IMR-90 (cell line): ENCODE measurements at regions of chr6 and their contacts with region 1.

Region 1: DNA sequence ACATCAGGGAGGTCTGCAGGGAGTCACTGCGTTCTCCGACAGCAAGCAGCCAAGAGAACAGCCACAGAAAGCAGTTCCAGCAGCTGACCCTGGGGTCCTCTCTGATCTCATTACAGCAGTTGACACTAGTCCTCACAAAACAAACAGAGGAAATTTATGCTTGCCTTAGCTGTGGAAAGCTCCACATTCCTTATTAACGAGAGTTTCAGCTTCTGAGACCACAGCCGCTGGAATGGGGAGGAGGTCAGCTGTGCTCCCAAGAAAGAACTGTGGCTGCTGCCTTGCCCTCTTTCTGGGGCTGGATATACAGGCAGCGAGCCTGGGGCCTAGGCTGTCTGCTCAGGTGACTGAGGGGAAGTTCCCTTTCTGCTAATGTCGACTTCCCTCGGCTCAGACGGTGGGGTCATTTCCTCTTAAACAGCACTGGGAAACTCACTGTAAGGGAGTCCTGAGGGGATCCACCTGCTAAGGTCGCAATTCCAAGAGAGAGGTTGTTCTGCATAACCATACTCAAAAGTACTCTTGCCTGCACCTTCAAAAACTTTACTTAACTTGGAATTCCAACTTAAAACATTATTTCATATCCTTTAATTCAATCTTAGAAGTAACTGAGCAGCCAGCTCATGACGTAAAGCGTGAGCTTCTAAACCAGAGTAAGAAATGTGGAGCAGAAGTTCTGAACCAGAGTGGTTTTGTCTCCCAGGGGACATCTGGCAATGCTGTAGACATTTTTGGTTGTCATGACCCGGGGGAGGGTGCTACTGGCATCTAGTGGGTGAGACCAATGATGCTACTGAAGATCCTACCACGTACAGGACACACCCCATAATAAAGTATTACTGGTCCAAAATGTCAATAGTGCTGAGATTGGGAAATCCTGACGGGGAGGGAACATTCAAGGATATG is 80.3 kb downstream of the BACH2 start:
- DNase-seq: peak; percentile 35
- ATAC-seq: no peak
- H3K4me3 ChIP-seq: no peak overlapping the region
- H3K27ac ChIP-seq: no peak overlapping the region
- H3K4me1 ChIP-seq: peaks cover 19% of the 10 kb centered on the region
- H3K27me3 ChIP-seq: no peaks in the 10 kb centered on the region
- CTCF ChIP-seq: no peak
- POLR2A ChIP-seq: no peak
- RAD21 ChIP-seq: no peak

Region 2: GRCh38 chr6:89970609-89971337 is 245.6 kb before region 1 on chr6:
- CTCF ChIA-PET with region 1: no interaction called
- POLR2A ChIA-PET with region 1: no interaction called
- dilution Hi-C with region 1: no loop called
- in situ Hi-C with region 1: no loop called
- intact Hi-C with region 1: loop called (anchors 1 kb)
- DNase-seq: peak; percentile 74
- ATAC-seq: peak; percentile 93
- H3K4me3 ChIP-seq: no peak overlapping the region
- H3K27ac ChIP-seq: no peak overlapping the region
- H3K4me1 ChIP-seq: no peaks in the 10 kb centered on the region
- H3K27me3 ChIP-seq: no peaks in the 10 kb centered on the region; the same call in 1 of the 2 replicates
- CTCF ChIP-seq: peak; percentile 79
- POLR2A ChIP-seq: no peak
- RAD21 ChIP-seq: peak; percentile 86

Region 3: DNA sequence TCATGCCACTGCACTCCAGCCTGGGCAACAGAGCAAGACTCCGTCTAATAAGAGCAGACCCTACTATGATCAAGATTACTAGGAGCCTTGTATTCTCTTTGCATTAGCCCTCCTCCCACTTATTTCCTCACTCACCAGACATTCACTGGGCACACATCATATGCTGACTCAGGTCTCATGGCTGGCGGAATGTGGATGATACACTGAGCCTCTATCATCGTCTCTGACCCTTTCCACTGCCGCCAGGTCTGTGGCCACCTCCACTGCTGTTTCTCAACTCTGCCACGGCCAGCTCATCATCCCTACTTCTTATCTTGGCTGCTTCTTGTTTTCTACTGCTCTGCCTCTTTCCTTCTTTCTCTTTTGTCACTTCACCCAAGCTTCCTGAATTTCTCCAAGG is 80.7 kb before region 1 on chr6:
- CTCF ChIA-PET with region 1: no interaction called
- POLR2A ChIA-PET with region 1: no interaction called
- dilution Hi-C with region 1: no loop called
- in situ Hi-C with region 1: no loop called
- intact Hi-C with region 1: loop called (anchors 5 kb)
- DNase-seq: peak; percentile 90
- ATAC-seq: peak; percentile 78
- H3K4me3 ChIP-seq: no peak overlapping the region
- H3K27ac ChIP-seq: peak overlapping the region; percentile 55
- H3K4me1 ChIP-seq: peaks cover 11% of the 10 kb centered on the region
- H3K27me3 ChIP-seq: no peaks in the 10 kb centered on the region
- CTCF ChIP-seq: no peak
- POLR2A ChIP-seq: peak; percentile 20; the same call in 1 of the 2 replicates
- RAD21 ChIP-seq: no peak; the same call in 1 of the 2 replicates

Region 4: DNA sequence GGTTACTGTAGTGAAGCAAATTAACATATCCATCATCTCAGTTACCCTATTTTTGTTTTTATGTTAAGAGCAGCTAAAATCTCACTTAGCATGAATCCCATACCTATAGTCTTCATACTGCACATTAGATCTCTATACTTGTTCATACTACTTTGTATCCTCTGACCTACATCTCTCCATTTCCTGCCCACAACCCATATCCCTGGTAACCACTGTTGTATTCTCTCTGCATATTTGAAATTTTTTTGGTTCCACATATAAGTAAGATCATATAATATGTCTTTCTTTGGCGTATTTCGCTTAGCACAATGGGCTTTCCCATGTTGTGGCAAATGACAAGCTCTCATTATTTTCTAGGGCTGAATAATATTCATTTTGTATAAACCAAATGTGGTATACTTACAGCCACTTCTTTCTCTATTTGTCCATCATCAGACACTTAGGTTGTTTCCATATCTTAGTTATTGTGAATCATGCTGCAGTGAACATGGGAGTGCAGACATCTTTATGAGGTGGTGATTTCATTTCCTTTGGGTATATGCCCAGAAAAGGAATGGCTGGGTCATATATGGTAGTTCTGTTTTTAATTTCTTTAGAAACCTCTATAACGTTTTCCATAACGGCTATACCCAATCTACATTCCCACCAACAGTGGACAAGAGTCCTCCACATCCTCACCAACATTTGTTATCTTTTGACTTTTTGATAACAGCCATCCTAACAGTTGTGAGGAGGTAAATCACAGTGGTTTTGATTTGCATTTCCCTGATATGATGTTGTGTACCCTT is 40.6 kb after region 1 on chr6:
- CTCF ChIA-PET with region 1: no interaction called
- POLR2A ChIA-PET with region 1: no interaction called
- dilution Hi-C with region 1: no loop called
- in situ Hi-C with region 1: no loop called
- intact Hi-C with region 1: no loop called
- DNase-seq: peak; percentile 90
- ATAC-seq: peak; percentile 93
- H3K4me3 ChIP-seq: no peak overlapping the region
- H3K27ac ChIP-seq: no peak overlapping the region
- H3K4me1 ChIP-seq: no peaks in the 10 kb centered on the region; the same call in 1 of the 2 replicates
- H3K27me3 ChIP-seq: no peaks in the 10 kb centered on the region; the same call in 1 of the 2 replicates
- CTCF ChIP-seq: no peak
- POLR2A ChIP-seq: no peak
- RAD21 ChIP-seq: no peak

Region 5: GRCh38 chr6:90285611-90286381 is 69.5 kb after region 1 on chr6:
- CTCF ChIA-PET with region 1: interaction called, 5 read pairs
- POLR2A ChIA-PET with region 1: interaction called, 4 read pairs
- dilution Hi-C with region 1: no loop called
- in situ Hi-C with region 1: loop called (anchors 5 kb)
- intact Hi-C with region 1: loop called (anchors 1 kb)
- DNase-seq: peak; percentile 91
- ATAC-seq: peak; percentile 94
- H3K4me3 ChIP-seq: no peak overlapping the region
- H3K27ac ChIP-seq: no peak overlapping the region
- H3K4me1 ChIP-seq: no peaks in the 10 kb centered on the region
- H3K27me3 ChIP-seq: no peaks in the 10 kb centered on the region
- CTCF ChIP-seq: no peak
- POLR2A ChIP-seq: no peak
- RAD21 ChIP-seq: no peak; the same call in 1 of the 2 replicates

Region 6: DNA sequence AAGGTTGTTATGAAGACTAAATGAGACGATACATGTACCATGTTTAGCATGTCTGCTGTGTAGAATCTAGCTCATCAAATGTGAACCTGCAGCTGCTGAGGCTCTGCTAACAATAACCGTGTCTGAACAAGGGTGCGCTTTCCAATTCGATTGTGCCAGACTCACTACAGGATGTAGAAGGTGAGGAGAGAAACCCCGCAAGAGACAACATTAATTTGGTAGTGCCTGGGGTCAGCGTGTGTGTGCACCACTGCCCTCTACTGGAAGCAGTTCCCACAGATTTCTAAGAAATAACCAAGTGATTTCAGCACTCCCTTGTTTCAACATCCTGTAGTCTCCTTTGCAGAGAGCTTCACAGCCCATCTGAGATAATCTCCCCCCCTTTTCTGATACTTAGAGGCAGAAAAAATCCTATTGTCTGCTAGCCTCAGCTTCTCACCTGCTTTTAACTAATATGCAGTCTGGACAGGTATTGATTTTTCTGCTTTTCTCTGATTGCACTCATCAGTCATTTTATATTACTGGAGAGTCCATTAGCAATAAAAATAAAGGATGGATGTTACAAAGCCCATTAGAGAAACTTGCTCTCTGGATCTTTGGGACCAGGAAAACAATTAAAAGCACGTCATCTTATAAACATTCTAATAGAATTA is 177.0 kb after region 1 on chr6:
- CTCF ChIA-PET with region 1: interaction called, 7 read pairs
- POLR2A ChIA-PET with region 1: no interaction called
- dilution Hi-C with region 1: no loop called
- in situ Hi-C with region 1: no loop called
- intact Hi-C with region 1: loop called (anchors 1 kb)
- DNase-seq: peak; percentile 71
- ATAC-seq: peak; percentile 93
- H3K4me3 ChIP-seq: no peak overlapping the region
- H3K27ac ChIP-seq: no peak overlapping the region
- H3K4me1 ChIP-seq: no peaks in the 10 kb centered on the region
- H3K27me3 ChIP-seq: peaks cover 20% of the 10 kb centered on the region
- CTCF ChIP-seq: peak; percentile 81
- POLR2A ChIP-seq: no peak
- RAD21 ChIP-seq: peak; percentile 91